ENCODE measurements at regions of chr3 and their contacts with region 1.

Region 1: GRCh38 chr3:37907906-37908305 is 46.2 kb downstream of the CTDSPL start:
- DNase-seq: peak; percentile 56
- H3K4me3 Mint-ChIP-seq: peak overlapping the region; percentile 67
- H3K27ac Mint-ChIP-seq: peak overlapping the region; percentile 84
- H3K4me1 Mint-ChIP-seq: peaks cover 53% of the 10 kb centered on the region
- H3K27me3 Mint-ChIP-seq: peaks cover 15% of the 10 kb centered on the region

Region 2: GRCh38 chr3:37967260-37967881 is 59.5 kb after region 1 on chr3:
- intact Hi-C with region 1: loop called (anchors 5 kb)
- DNase-seq: peak; percentile 40
- H3K4me3 Mint-ChIP-seq: no peak overlapping the region
- H3K27ac Mint-ChIP-seq: no peak overlapping the region
- H3K4me1 Mint-ChIP-seq: no peaks in the 10 kb centered on the region
- H3K27me3 Mint-ChIP-seq: peaks cover 3% of the 10 kb centered on the region

Region 3: GRCh38 chr3:38039101-38039898 is 131.4 kb after region 1 on chr3 and contains the start of gene DLEC1:
- intact Hi-C with region 1: loop called (anchors 2 kb)
- DNase-seq: peak; percentile 84
- H3K4me3 Mint-ChIP-seq: peak within 1 kb of the TSS; percentile 75
- H3K27ac Mint-ChIP-seq: peak within 1 kb of the TSS; percentile 93
- H3K4me1 Mint-ChIP-seq: peaks cover 36% of the 10 kb centered on the region
- H3K27me3 Mint-ChIP-seq: peaks cover 7% of the 10 kb centered on the region
- total RNA-seq, gene DLEC1: 0.10 and 0.12 TPM in 2 replicates

Measured in activated T-helper 1 cell treated with anti-CD3 and anti-CD28 coated beads, Interleukin-12 subunit alpha, Interleukin-12 subunit beta, Interleukin-2, Interleukin-4 antibody, amounts not matched to agents 30 ng/mL and 10 ng/mL and 1 ng/mL, durations not matched to agents 14 hours and 24 hours and 36 hours (primary cell).